Activated naive CD4-positive, alpha-beta T cell treated with anti-CD3 and anti-CD28 coated beads for 36 hours (primary cell): ENCODE measurements at regions of chr18 and their contacts with region 1.

Region 1: GRCh38 chr18:26255695-26256622 is 29.7 kb downstream of the TAF4B start:
- DNase-seq: no peak
- H3K4me3 Mint-ChIP-seq: no peak overlapping the region
- H3K27ac Mint-ChIP-seq: no peak overlapping the region
- H3K4me1 Mint-ChIP-seq: peaks cover 31% of the 10 kb centered on the region
- H3K27me3 Mint-ChIP-seq: no peaks in the 10 kb centered on the region

Region 2: DNA sequence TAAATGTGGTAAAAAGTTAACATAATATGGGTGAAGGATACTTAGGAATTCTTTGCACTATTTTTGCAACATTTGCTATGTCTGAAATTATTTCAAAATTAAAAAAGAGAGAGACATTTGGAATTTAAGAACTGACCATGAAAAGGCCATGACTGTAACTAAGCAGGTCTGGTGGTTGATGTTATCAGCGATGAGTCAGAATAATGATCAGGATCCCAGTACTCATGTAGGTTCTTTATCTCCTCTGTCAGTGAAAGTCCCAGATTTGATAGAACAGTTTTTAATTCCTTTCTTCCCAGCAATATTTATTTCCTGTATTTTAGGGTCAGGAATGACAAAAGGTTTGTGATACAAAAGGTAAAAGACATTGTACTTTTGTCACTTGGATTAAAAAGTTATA is 661.6 kb before region 1 on chr18:
- CTCF ChIA-PET with region 1: no interaction called
- intact Hi-C with region 1: no loop called
- DNase-seq: no peak
- H3K4me3 Mint-ChIP-seq: no peak overlapping the region
- H3K27ac Mint-ChIP-seq: no peak overlapping the region
- H3K4me1 Mint-ChIP-seq: no peaks in the 10 kb centered on the region
- H3K27me3 Mint-ChIP-seq: no peaks in the 10 kb centered on the region

Region 3: GRCh38 chr18:26685438-26686157 is 429.6 kb after region 1 on chr18:
- CTCF ChIA-PET with region 1: no interaction called
- intact Hi-C with region 1: no loop called
- DNase-seq: no peak
- H3K4me3 Mint-ChIP-seq: no peak overlapping the region
- H3K27ac Mint-ChIP-seq: no peak overlapping the region
- H3K4me1 Mint-ChIP-seq: no peaks in the 10 kb centered on the region
- H3K27me3 Mint-ChIP-seq: peaks cover 2% of the 10 kb centered on the region

Region 4: DNA sequence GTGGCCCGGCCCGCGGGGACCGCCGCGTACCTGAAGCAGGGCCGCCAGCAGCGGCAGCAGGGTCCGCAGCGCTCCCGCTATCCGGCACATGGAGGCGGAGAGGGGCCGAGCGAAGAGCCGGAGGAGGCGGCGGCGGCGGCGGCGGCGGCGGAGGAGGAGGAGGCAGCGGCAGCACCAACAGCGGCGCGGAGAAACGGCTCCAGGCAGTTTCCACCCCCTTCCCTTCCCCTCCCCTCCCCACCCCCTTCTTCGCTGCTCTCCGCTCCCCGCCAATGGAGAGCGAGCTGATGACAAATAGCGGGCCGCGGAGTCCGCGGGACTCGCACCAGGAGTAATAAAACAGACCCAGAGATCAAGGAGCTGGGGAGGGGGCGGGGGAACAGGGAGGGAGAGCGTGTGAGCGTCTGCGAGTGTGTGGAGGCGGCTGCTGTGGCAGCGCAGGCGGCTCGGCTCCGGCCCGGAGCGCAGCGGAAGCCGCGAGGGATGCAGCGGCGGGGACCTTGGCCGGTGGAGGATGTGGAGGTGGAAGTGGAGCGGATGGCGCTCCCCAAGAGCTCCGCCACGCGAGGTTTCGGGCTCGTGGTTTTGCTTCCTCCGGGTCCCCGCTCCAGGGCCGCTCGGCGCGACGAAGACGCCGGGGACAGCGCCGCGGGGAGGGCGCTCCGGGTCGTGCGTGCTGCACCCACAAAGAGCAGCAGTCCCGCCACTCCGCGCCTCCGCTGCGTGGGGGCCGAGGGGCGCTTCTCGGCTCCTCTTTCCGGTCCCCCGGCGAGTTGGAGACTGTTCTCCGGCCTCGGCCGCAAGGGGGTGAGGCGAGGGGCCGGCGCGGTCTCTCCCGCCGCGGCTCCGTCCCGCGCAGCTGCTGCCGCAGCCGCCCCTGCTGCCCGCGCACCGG is 1921.2 kb after region 1 on chr18 and contains the start of gene CDH2:
- CTCF ChIA-PET with region 1: no interaction called
- intact Hi-C with region 1: loop called (anchors 5 kb)
- DNase-seq: peak; percentile 20
- H3K4me3 Mint-ChIP-seq: peak within 1 kb of the TSS; percentile 57
- H3K27ac Mint-ChIP-seq: no peak within 1 kb of the TSS
- H3K4me1 Mint-ChIP-seq: peaks cover 18% of the 10 kb centered on the region
- H3K27me3 Mint-ChIP-seq: peaks cover 46% of the 10 kb centered on the region
- total RNA-seq, gene CDH2: not detected